Breast epithelium (tissue), 4 donors: ENCODE measurements at regions of chr15 and their contacts with region 1.

Region 1: GRCh38 chr15:86572368-86572841 is 492.7 kb downstream of the AGBL1 start:
- DNase-seq: no peak
- H3K4me3 ChIP-seq: no peak overlapping the region
- H3K27ac ChIP-seq: no peak overlapping the region
- H3K4me1 ChIP-seq: no peaks in the 10 kb centered on the region
- H3K27me3 ChIP-seq: peaks cover 0 to 16% of the 10 kb centered on the region in 2 donors
- CTCF ChIP-seq: no peak
- POLR2A ChIP-seq: no peak

Region 2: DNA sequence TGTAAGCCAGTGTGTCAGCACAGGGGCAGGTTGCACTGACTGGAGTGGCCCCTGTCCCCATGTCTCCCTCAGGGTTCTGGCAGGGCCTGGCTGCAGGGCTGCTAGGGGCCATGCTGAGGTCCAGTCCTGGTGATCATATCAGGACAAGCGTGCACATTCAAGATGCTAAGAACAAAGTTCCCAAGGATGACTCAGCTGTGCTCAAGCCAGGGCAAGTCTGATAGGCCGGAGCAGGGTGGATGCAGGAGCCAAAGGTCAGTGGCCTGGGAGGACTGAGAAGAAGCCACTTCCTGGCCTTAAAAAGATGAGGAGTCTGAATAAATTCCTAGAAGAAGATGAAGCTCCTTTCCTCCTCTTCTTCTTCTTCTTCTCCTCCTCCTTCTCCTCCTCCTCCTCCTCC is 139.5 kb before region 1 on chr15:
- intact Hi-C with region 1: no loop called
- DNase-seq: no peak
- H3K4me3 ChIP-seq: no peak overlapping the region
- H3K27ac ChIP-seq: no peak overlapping the region
- H3K4me1 ChIP-seq: no peaks in the 10 kb centered on the region
- H3K27me3 ChIP-seq: no peaks in the 10 kb centered on the region
- CTCF ChIP-seq: no peak
- POLR2A ChIP-seq: no peak

Region 3: DNA sequence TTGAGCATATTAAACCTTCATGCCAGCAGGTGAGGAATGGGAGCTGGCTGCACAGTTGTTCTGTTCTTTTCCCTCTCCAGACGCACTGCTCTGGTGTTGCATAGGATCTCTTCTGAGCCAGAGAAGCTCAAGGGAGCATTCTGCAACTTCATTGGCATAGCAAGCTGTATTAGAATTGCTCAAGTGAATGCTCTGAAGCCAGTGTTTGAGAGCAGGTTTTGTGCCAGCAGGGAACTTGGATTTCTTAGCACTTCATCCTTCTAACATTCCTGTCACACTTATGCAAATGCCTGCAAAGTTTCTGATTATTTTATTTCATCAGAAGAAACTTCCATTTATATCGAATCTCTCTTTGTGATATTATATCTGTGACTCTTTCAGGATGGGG is 126.2 kb before region 1 on chr15:
- intact Hi-C with region 1: loop called (anchors 5 kb)
- DNase-seq: no peak
- H3K4me3 ChIP-seq: no peak overlapping the region
- H3K27ac ChIP-seq: no peak overlapping the region
- H3K4me1 ChIP-seq: no peaks in the 10 kb centered on the region
- H3K27me3 ChIP-seq: no peaks in the 10 kb centered on the region
- CTCF ChIP-seq: no peak
- POLR2A ChIP-seq: no peak

Region 4: GRCh38 chr15:86588413-86588812 is 16.0 kb after region 1 on chr15:
- intact Hi-C with region 1: no loop called
- DNase-seq: no peak
- H3K4me3 ChIP-seq: no peak overlapping the region
- H3K27ac ChIP-seq: no peak overlapping the region
- H3K4me1 ChIP-seq: no peaks in the 10 kb centered on the region
- H3K27me3 ChIP-seq: no peaks in the 10 kb centered on the region
- CTCF ChIP-seq: no peak
- POLR2A ChIP-seq: no peak